Posterior vena cava (tissue), 2 donors: ENCODE measurements at regions of chr2 and their contacts with region 1.

Region 1: GRCh38 chr2:230394301-230394700 is 21.7 kb upstream of the SP100 start:
- DNase-seq: no peak

Region 2: GRCh38 chr2:230326453-230327417 is 67.6 kb before region 1 on chr2 and contains the start of gene SP140L:
- intact Hi-C with region 1: no loop called
- DNase-seq: peak; percentile 94
- total RNA-seq, gene SP140L: 10.1 to 17.0 TPM

Region 3: GRCh38 chr2:230377071-230377470 is 17.2 kb before region 1 on chr2:
- intact Hi-C with region 1: loop called in 1 of 2 experiments (anchors 2 kb)
- DNase-seq: no peak